K562 (cell line): ENCODE measurements at regions of chr16 and their contacts with region 1.

Region 1: DNA sequence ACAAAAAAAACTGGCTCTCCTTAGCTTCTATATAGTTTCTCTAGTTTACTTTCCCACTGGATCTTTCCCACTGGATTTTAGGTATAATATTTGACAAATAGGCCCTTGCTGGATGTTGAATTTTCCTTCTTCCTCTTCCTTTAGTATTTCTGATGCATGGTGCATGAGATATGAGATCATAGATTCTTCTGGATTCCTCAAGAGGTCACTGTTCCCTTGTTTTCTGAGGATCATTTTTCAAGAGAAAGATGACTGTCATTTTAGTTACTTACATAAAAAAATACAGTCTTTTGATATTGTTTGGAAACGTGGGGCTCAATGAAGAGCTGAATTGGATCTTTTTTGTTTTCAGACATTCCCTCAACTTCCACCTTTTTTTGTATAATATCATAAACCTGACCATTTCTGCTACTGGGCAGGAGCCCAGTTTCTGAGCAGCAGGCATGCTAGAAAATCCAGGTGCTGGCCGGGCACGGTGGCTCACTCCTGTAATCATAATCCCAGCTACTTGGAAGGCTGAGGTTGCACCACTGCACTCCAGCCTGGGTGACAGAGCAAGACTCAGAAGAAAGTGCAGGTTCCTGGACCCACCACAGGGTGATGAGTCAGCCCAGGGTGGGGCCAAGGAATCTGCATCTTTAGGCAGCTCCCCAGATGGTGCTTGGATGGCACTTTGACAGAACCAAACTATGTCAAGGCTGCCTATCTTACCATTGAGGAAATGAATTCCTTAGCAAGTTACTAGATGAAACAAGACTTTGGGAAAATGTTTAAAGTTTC is 70.3 kb downstream of the SDR42E1 start:
- DNase-seq: peak in 2 of 4 experiments; percentile 43 to 48
- ATAC-seq: peak; percentile 77
- H3K4me3 ChIP-seq: no peak overlapping the region
- H3K27ac ChIP-seq: no peak overlapping the region
- H3K4me1 ChIP-seq: no peaks in the 10 kb centered on the region
- H3K27me3 ChIP-seq: peaks cover 14 to 31% of the 10 kb centered on the region in 2 experiments; a peak in 4 of 5 replicates
- CTCF ChIP-seq: peak; percentile 45 to 85 (median 58); a peak in 5 of 6 replicates
- EP300 ChIP-seq: no peak
- POLR2A ChIP-seq: no peak
- RAD21 ChIP-seq: peak; percentile 69 to 78

Region 2: GRCh38 chr16:81928975-81929374 is 12.0 kb before region 1 on chr16:
- CTCF ChIA-PET with region 1: no interaction called
- POLR2A ChIA-PET with region 1: no interaction called
- in situ Hi-C with region 1: no loop called
- intact Hi-C with region 1: no loop called
- DNase-seq: peak; percentile 56 to 70 (median 62)
- ATAC-seq: peak; percentile 91
- H3K4me3 ChIP-seq: no peak overlapping the region
- H3K27ac ChIP-seq: no peak overlapping the region
- H3K4me1 ChIP-seq: peaks cover 5 to 10% of the 10 kb centered on the region in 2 experiments; a peak in 3 of 5 replicates
- H3K27me3 ChIP-seq: peaks cover 17 to 38% of the 10 kb centered on the region in 2 experiments; a peak in 4 of 5 replicates
- CTCF ChIP-seq: no peak
- EP300 ChIP-seq: no peak
- POLR2A ChIP-seq: no peak
- RAD21 ChIP-seq: no peak

Region 3: DNA sequence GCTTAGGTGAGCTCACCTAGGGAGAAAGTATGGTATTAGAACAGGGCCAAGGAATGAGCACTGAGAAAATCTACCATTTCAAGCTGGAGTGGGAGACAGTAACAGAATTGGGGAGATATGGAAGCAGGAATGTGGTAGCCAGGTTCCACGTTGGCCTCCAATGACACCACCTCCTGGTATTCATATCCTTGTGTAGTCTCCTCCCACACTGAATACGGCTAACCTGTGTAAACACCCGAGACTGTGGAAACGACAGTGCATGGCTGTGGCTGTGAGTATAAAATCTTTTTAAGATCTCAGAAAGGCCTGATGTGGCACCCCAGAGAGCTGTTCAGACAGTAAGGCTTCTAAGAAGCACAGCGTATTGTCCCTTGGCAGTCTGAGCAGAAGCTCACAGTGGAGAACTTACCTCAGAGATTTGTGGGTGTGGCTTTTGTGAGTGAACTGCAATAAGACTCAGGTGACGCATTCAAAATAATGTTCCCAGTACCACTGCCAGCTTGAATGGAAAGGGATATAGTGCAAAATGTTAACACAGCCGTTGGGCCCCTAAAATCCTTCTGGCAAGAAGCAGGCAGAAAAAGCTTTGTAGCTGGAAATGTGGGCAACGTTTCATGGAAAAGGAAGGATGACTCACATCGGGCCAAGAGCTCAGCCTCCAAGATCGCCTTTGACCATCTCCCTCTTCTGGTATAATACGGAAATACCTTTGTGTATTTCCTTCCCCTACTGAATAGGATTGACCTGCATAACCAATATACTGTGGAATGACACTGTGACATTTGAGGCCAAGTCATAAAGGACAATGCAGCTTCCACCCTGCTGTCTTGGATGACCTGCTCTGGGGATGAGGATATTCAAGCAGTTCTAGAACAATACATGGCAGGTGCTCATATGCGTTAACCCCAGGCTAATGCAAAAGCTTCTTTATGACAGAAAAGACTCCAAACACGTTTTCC is 56.0 kb after region 1 on chr16:
- CTCF ChIA-PET with region 1: no interaction called
- POLR2A ChIA-PET with region 1: interaction called, 5 read pairs
- in situ Hi-C with region 1: no loop called
- intact Hi-C with region 1: loop called (anchors 5 kb)
- DNase-seq: peak; percentile 39 to 47 (median 43)
- ATAC-seq: peak; percentile 80
- H3K4me3 ChIP-seq: no peak overlapping the region
- H3K27ac ChIP-seq: no peak overlapping the region
- H3K4me1 ChIP-seq: no peaks in the 10 kb centered on the region; a peak in 1 of 5 replicates
- H3K27me3 ChIP-seq: peaks cover 0 to 17% of the 10 kb centered on the region in 2 experiments; a peak in 3 of 5 replicates
- CTCF ChIP-seq: peak; percentile 28 to 56 (median 37); a peak in 4 of 6 replicates
- EP300 ChIP-seq: no peak
- POLR2A ChIP-seq: no peak
- RAD21 ChIP-seq: peak; percentile 44 to 56; a peak in 3 of 4 replicates

Region 4: DNA sequence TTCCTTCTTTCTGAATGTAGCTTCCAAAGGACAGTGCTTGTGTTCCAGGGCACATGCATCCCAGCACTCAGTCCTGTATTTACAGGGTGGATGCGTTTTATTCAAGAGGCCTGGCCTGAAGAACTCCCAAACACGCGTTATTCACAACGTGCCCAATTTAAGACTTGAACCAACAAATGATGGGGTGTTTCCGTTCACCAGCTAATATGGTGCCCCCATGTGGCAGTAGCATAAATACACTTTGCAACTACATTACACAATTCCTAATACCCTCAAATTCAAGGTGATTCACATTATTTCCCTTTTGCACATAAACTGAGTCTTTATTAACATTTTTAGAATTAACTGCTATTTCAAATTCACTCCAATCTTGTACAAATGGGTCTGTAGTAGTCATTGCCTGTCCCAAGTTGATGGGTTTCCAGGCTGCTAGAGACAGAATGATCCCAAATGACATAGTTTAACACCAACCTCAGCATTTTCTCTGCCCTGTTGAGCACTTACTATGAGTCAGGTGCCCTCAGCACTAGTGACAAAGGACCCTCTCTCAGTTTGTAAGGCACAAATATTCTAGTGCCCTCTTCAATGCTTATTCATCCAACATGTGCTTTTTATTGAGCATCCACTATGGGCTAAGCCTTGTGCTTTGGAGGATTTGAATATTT is 121.0 kb after region 1 on chr16:
- CTCF ChIA-PET with region 1: interaction called, 7 read pairs
- POLR2A ChIA-PET with region 1: no interaction called
- in situ Hi-C with region 1: no loop called
- intact Hi-C with region 1: loop called (anchors 2 kb)
- DNase-seq: peak; percentile 48 to 54 (median 53)
- ATAC-seq: peak; percentile 71
- H3K4me3 ChIP-seq: no peak overlapping the region
- H3K27ac ChIP-seq: no peak overlapping the region
- H3K4me1 ChIP-seq: no peaks in the 10 kb centered on the region
- H3K27me3 ChIP-seq: peaks cover 3 to 13% of the 10 kb centered on the region in 2 experiments; a peak in 3 of 5 replicates
- CTCF ChIP-seq: peak; percentile 55 to 72 (median 71)
- EP300 ChIP-seq: no peak
- POLR2A ChIP-seq: no peak
- RAD21 ChIP-seq: peak; percentile 45 to 59

Region 5: GRCh38 chr16:82229796-82230619 is 289.0 kb after region 1 on chr16:
- CTCF ChIA-PET with region 1: interaction called, 23 read pairs
- POLR2A ChIA-PET with region 1: interaction called, 3 read pairs
- in situ Hi-C with region 1: loop called (anchors 5 kb)
- intact Hi-C with region 1: loop called (anchors 1 kb)
- DNase-seq: peak; percentile 68 to 79 (median 72)
- ATAC-seq: peak; percentile 94
- H3K4me3 ChIP-seq: no peak overlapping the region
- H3K27ac ChIP-seq: no peak overlapping the region
- H3K4me1 ChIP-seq: no peaks in the 10 kb centered on the region
- H3K27me3 ChIP-seq: no peaks in the 10 kb centered on the region
- CTCF ChIP-seq: peak; percentile 86 to 95 (median 90)
- EP300 ChIP-seq: no peak
- POLR2A ChIP-seq: no peak
- RAD21 ChIP-seq: peak; percentile 89 to 98

Region 6: GRCh38 chr16:83215406-83216001 is 1274.5 kb after region 1 on chr16:
- CTCF ChIA-PET with region 1: no interaction called
- POLR2A ChIA-PET with region 1: no interaction called
- in situ Hi-C with region 1: no loop called
- intact Hi-C with region 1: loop called (anchors 5 kb)
- DNase-seq: peak; percentile 59 to 83 (median 76)
- ATAC-seq: peak; percentile 83
- H3K4me3 ChIP-seq: no peak overlapping the region
- H3K27ac ChIP-seq: no peak overlapping the region
- H3K4me1 ChIP-seq: no peaks in the 10 kb centered on the region
- H3K27me3 ChIP-seq: no peaks in the 10 kb centered on the region
- CTCF ChIP-seq: peak; percentile 71 to 83 (median 76)
- EP300 ChIP-seq: no peak
- POLR2A ChIP-seq: no peak
- RAD21 ChIP-seq: peak in 1 of 2 experiments; percentile 53; a peak in 2 of 4 replicates